ENCODE measurements at regions of chr22 and their contacts with region 1.

Region 1: GRCh38 chr22:50061824-50062355 is 3.8 kb upstream of the TTLL8 start:
- DNase-seq: no peak
- H3K4me3 ChIP-seq: no peak overlapping the region
- H3K27ac ChIP-seq: no peak overlapping the region
- H3K4me1 ChIP-seq: no peaks in the 10 kb centered on the region
- H3K27me3 ChIP-seq: peaks cover 65% of the 10 kb centered on the region
- CTCF ChIP-seq: no peak

Region 2: GRCh38 chr22:49992921-49993648 is 68.8 kb before region 1 on chr22:
- CTCF ChIA-PET with region 1: no interaction called
- POLR2A ChIA-PET with region 1: no interaction called
- intact Hi-C with region 1: no loop called
- DNase-seq: peak; percentile 32 to 52
- H3K4me3 ChIP-seq: no peak overlapping the region
- H3K27ac ChIP-seq: no peak overlapping the region
- H3K4me1 ChIP-seq: no peaks in the 10 kb centered on the region; the same call in none of the 2 replicates
- H3K27me3 ChIP-seq: peaks cover 37% of the 10 kb centered on the region
- CTCF ChIP-seq: peak; percentile 87

Region 3: DNA sequence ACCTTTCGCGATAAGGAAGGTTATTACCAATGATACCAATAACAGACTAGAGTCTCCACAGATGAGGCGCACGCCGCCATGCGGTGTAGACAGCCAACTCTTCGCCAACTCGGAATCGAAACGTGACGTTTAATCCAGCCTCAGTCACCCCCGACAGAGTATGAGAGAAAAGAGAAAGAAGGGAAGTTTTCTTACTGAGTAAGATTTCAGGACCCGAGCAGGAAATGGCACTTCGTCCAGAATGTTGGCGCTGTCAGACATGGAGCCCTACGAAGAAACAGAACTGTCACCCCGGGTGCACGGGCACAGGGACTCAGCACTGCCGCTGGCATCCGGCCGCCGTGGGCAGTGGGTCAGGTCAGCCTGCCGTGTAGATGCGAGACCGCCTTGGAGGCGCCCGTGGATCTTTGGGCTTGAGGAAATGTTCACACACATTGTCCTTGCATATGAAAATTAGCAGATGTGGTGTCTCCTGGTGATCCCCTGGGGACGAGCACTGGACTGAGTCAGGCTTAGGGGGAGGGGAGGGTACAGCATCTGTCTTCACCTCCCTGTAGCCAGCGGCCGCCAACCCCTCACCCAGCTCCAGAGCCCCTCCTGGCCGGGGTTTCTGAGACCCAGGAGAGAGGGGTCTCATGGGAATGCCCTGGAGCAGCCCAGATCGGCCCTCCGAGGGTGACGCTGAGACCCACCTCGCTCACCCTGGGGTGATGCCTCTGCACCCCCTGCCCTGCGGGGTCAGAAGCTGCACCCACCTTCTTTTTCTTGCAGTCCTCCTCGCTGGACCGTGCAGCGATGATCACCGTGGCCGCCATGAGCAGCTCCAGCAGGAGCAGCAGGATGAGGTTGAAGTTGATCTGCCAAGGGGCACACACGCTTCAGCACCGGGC is 15.0 kb after region 1 on chr22:
- CTCF ChIA-PET with region 1: interaction called, 11 read pairs
- POLR2A ChIA-PET with region 1: no interaction called
- intact Hi-C with region 1: no loop called
- DNase-seq: no peak
- H3K4me3 ChIP-seq: no peak overlapping the region
- H3K27ac ChIP-seq: no peak overlapping the region
- H3K4me1 ChIP-seq: no peaks in the 10 kb centered on the region
- H3K27me3 ChIP-seq: peaks cover 19% of the 10 kb centered on the region
- CTCF ChIP-seq: no peak

Measured in PC-9 (cell line).